Lower leg skin (tissue), 4 donors: ENCODE measurements at regions of chr1 and their contacts with region 1.

Region 1: DNA sequence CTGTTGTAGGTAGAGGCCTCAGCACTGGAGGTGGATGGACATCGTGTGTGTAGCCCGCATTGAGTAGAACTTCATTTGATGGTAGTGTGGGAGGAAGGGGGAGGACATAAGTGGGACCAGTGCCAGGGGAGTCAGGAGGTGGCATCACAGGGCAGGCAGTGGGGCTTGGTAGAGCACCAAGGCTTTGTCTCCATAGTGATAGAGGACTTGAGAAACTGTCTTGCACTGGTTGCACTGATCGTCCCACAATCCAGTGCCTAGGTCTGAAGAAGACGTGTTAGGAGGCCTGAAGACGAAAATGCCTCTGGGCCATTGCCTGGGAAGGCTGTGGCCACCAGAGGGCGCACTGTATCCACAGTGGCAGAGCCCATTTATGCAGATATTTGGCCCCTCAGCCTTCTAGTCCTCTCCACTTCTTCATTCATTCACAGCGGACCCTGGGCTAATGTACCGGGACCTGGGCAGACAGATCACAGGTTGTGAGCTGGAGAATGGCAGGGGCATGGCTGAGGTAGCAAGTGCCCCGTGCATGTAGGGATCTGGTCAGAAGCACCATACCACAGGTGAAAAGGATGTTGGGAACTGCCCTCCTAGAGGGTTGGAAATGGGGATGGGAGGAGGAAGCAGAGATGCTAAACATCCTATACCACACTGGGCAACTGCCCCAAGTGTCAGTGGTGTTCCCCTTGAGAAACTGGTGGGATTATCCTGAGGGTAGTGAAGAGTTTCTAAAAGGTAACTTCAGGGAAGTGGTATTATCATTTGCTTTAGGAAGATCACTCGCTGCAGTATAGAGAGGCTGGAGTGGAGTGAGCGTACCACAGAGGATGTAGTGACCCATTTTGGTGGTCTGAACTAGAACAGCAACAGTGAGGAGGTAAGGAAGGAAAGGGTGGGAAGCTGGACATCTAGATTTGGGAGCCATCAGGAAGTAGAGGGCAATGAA is 95.3 kb downstream of the PIK3R3 start:
- DNase-seq: peak; percentile 85 to 97
- H3K4me3 ChIP-seq: no peak overlapping the region
- CTCF ChIP-seq: peak in 1 of 3 donors; percentile 86
- POLR2A ChIP-seq: no peak

Region 2: GRCh38 chr1:46179138-46180081 is 142.2 kb after region 1 on chr1:
- intact Hi-C with region 1: loop called (anchors 5 kb)
- DNase-seq: peak; percentile 85 to 89
- H3K4me3 ChIP-seq: no peak overlapping the region
- CTCF ChIP-seq: peak in 1 of 3 donors; percentile 84
- POLR2A ChIP-seq: no peak

Region 3: GRCh38 chr1:46223472-46223943 is 186.3 kb after region 1 on chr1:
- intact Hi-C with region 1: loop called (anchors 5 kb)
- DNase-seq: peak; percentile 70 to 91
- H3K4me3 ChIP-seq: no peak overlapping the region
- CTCF ChIP-seq: peak in 2 of 3 donors; percentile 64 to 78
- POLR2A ChIP-seq: no peak